ENCODE measurements at regions of chr2 and their contacts with region 1.

Region 1: GRCh38 chr2:222049946-222050345 is 248.9 kb downstream of the PAX3 start:
- DNase-seq: peak; percentile 30
- H3K4me3 ChIP-seq: no peak overlapping the region
- H3K27ac ChIP-seq: no peak overlapping the region
- H3K4me1 ChIP-seq: no peaks in the 10 kb centered on the region
- H3K27me3 ChIP-seq: peaks cover 9% of the 10 kb centered on the region
- CTCF ChIP-seq: no peak

Region 2: GRCh38 chr2:221502270-221503010 is 547.5 kb before region 1 on chr2:
- CTCF ChIA-PET with region 1: no interaction called
- dilution Hi-C with region 1: no loop called
- in situ Hi-C with region 1: no loop called
- intact Hi-C with region 1: no loop called
- DNase-seq: peak; percentile 70
- H3K4me3 ChIP-seq: no peak overlapping the region
- H3K27ac ChIP-seq: no peak overlapping the region
- H3K4me1 ChIP-seq: peaks cover 13% of the 10 kb centered on the region
- H3K27me3 ChIP-seq: no peaks in the 10 kb centered on the region
- CTCF ChIP-seq: no peak

Region 3: DNA sequence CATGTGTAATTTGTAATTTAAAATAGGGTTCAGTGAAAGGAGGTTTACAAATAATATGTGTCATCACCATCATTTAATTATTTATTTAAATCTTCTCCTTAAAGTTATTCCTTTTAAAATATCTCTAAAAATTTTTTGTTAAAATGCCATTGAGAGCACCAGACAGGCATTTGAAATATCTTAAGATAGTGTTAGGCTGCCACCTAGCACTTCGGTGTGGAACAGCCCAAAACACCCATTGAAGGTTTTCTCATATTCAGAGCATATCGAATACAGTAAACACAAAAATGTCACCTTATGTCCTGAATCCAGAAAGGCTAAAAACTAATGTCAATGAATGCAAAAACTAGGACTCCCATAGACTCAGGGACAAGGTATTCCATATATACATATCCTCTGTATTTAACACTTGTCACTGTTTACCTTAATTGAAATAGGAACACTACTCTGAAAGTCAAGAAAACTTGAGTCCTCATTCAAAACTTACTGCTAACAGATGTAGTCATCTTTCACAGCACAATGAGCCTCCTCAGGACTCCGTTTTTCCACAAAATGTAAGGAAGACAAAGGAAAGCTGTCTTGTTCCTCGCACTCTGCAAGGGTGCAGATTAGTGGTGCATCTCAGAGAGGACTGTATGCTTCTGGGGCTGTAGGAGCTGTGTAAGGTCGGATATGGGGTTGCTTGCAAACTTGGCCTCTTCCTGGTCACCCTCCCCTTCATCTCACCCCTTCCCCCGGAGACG is 80.7 kb before region 1 on chr2:
- CTCF ChIA-PET with region 1: no interaction called
- dilution Hi-C with region 1: no loop called
- in situ Hi-C with region 1: no loop called
- intact Hi-C with region 1: no loop called
- DNase-seq: peak; percentile 23
- H3K4me3 ChIP-seq: no peak overlapping the region
- H3K27ac ChIP-seq: no peak overlapping the region
- H3K4me1 ChIP-seq: no peaks in the 10 kb centered on the region
- H3K27me3 ChIP-seq: no peaks in the 10 kb centered on the region
- CTCF ChIP-seq: peak; percentile 73 to 75

Region 4: GRCh38 chr2:222013889-222014288 is 36.1 kb before region 1 on chr2:
- CTCF ChIA-PET with region 1: no interaction called
- dilution Hi-C with region 1: no loop called
- in situ Hi-C with region 1: no loop called
- intact Hi-C with region 1: no loop called
- DNase-seq: no peak
- H3K4me3 ChIP-seq: no peak overlapping the region
- H3K27ac ChIP-seq: no peak overlapping the region
- H3K4me1 ChIP-seq: no peaks in the 10 kb centered on the region
- H3K27me3 ChIP-seq: peaks cover 4% of the 10 kb centered on the region
- CTCF ChIP-seq: no peak

Region 5: GRCh38 chr2:222554517-222554916 is 504.6 kb after region 1 on chr2:
- CTCF ChIA-PET with region 1: no interaction called
- dilution Hi-C with region 1: no loop called
- in situ Hi-C with region 1: loop called (anchors 10 to 25 kb)
- intact Hi-C with region 1: no loop called
- DNase-seq: no peak
- H3K4me3 ChIP-seq: no peak overlapping the region
- H3K27ac ChIP-seq: no peak overlapping the region
- H3K4me1 ChIP-seq: no peaks in the 10 kb centered on the region
- H3K27me3 ChIP-seq: no peaks in the 10 kb centered on the region
- CTCF ChIP-seq: no peak

Measured in mammary epithelial cell (primary cell).